ENCODE measurements at regions of chr13 and their contacts with region 1.

Region 1: GRCh38 chr13:79423801-79424642 is 18.0 kb upstream of the RBM26 start:
- DNase-seq: no peak
- ATAC-seq: peak; percentile 85
- H3K4me3 ChIP-seq: no peak overlapping the region
- H3K27ac ChIP-seq: no peak overlapping the region
- H3K4me1 ChIP-seq: no peaks in the 10 kb centered on the region
- H3K27me3 ChIP-seq: no peaks in the 10 kb centered on the region
- CTCF ChIP-seq: peak; percentile 46 to 71 (median 56); a peak in 5 of 6 replicates
- EP300 ChIP-seq: no peak
- POLR2A ChIP-seq: no peak
- RAD21 ChIP-seq: peak; percentile 90

Region 2: GRCh38 chr13:78393286-78394138 is 1030.5 kb before region 1 on chr13:
- CTCF ChIA-PET with region 1: no interaction called
- POLR2A ChIA-PET with region 1: no interaction called
- RAD21 ChIA-PET with region 1: no interaction called
- SMC1A ChIA-PET with region 1: no interaction called
- in situ Hi-C with region 1: no loop called
- intact Hi-C with region 1: no loop called
- DNase-seq: no peak
- ATAC-seq: no peak
- H3K4me3 ChIP-seq: no peak overlapping the region
- H3K27ac ChIP-seq: no peak overlapping the region
- H3K4me1 ChIP-seq: no peaks in the 10 kb centered on the region; the same call in none of the 2 replicates
- H3K27me3 ChIP-seq: no peaks in the 10 kb centered on the region
- CTCF ChIP-seq: no peak
- EP300 ChIP-seq: no peak
- POLR2A ChIP-seq: no peak
- RAD21 ChIP-seq: no peak

Region 3: GRCh38 chr13:79398915-79399314 is 25.1 kb before region 1 on chr13:
- CTCF ChIA-PET with region 1: interaction called, 14 read pairs
- POLR2A ChIA-PET with region 1: no interaction called
- RAD21 ChIA-PET with region 1: interaction called, 11 read pairs
- SMC1A ChIA-PET with region 1: interaction called, 7 read pairs
- in situ Hi-C with region 1: no loop called
- intact Hi-C with region 1: no loop called
- DNase-seq: no peak
- ATAC-seq: no peak
- H3K4me3 ChIP-seq: no peak overlapping the region
- H3K27ac ChIP-seq: no peak overlapping the region
- H3K4me1 ChIP-seq: peaks cover 7% of the 10 kb centered on the region
- H3K27me3 ChIP-seq: no peaks in the 10 kb centered on the region
- CTCF ChIP-seq: no peak
- EP300 ChIP-seq: no peak
- POLR2A ChIP-seq: no peak
- RAD21 ChIP-seq: no peak

Region 4: DNA sequence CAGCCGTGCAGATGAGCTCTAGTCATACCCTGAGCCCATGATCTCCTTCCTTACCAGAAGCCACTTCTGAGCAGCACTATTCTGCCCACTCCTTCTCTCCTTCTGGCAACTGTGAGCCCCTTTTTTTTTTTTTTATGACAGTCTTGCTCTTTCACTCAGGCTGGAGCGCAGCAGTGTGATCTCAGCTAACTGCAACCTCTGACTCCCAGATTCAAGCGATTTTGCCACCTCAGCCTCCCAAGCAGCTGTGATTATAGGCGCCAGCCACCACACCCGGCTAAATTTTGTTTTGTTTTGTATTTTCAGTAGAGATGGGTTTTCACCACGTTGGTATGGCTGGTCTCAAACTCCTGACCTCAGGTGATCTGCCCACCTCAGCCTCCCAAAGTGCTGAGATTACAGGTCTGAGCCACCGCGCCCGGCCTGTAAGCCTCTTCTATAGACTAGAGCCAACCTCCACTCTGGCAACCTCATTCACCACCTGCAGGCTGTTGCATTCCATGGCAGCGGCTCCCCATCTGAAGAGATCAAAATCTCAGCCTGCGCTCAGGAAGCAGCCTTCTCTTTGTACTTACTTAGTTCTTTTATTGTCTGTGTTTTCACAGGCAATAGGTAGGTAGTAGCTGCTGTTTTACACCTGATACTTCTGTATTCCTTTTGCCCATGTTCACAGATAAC is 22.1 kb after region 1 on chr13:
- CTCF ChIA-PET with region 1: interaction called, 22 read pairs
- POLR2A ChIA-PET with region 1: no interaction called
- RAD21 ChIA-PET with region 1: interaction called, 19 read pairs
- SMC1A ChIA-PET with region 1: interaction called, 14 read pairs
- in situ Hi-C with region 1: no loop called
- intact Hi-C with region 1: no loop called
- DNase-seq: no peak
- ATAC-seq: no peak; the same call in 1 of the 3 replicates
- H3K4me3 ChIP-seq: no peak overlapping the region
- H3K27ac ChIP-seq: no peak overlapping the region
- H3K4me1 ChIP-seq: 0 out of 2 replicates have a peak, but pooled peaks cover 1% of the 10 kb centered on the region
- H3K27me3 ChIP-seq: no peaks in the 10 kb centered on the region
- CTCF ChIP-seq: no peak
- EP300 ChIP-seq: no peak
- POLR2A ChIP-seq: no peak
- RAD21 ChIP-seq: no peak

Region 5: DNA sequence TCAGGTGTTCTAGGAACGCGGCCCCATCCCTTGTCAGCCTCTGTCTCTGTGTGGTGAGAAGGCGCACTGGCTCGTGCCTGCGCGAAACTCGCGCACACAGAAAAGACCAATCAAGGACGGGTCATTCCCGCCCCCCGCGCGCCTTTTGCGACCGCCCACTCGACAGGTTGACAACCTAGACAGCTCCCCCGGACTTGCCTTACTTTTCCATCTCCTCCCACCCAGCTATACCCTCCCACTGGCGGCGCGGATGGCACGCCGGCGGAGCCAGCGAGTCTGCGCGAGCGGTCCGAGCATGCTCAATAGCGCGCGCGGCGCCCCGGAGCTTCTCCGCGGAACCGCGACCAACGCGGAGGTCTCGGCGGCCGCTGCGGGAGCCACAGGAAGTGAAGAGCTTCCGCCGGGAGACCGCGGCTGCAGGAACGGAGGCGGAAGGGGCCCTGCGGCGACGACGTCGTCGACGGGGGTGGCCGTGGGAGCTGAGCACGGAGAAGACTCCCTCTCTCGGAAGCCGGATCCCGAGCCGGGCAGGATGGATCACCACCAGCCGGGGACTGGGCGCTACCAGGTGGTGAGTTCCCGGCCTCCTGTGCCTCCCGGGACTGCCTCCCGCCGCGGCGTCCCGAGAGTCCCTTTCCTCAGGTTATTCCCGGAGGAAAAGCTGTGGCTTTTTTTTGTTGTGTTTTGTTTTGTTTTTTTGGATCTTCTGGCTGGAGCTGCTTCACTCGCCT is 57.1 kb after region 1 on chr13 and contains the start of gene NDFIP2:
- CTCF ChIA-PET with region 1: interaction called, 50 read pairs
- POLR2A ChIA-PET with region 1: interaction called, 3 read pairs
- RAD21 ChIA-PET with region 1: interaction called, 58 read pairs
- SMC1A ChIA-PET with region 1: interaction called, 75 read pairs
- in situ Hi-C with region 1: no loop called
- intact Hi-C with region 1: loop called (anchors 5 kb)
- DNase-seq: peak; percentile 58
- ATAC-seq: peak; percentile 89
- H3K4me3 ChIP-seq: peak within 1 kb of the TSS; percentile 97
- H3K27ac ChIP-seq: no peak within 1 kb of the TSS
- H3K4me1 ChIP-seq: peaks cover 4% of the 10 kb centered on the region; the same call in 1 of the 2 replicates
- H3K27me3 ChIP-seq: no peaks in the 10 kb centered on the region
- CTCF ChIP-seq: no peak
- EP300 ChIP-seq: peak; percentile 20 to 45; a peak in 2 of 4 replicates
- POLR2A ChIP-seq: peak; percentile 82
- RAD21 ChIP-seq: no peak
- polyA plus RNA-seq, gene NDFIP2: 23.0 to 30.7 TPM

Region 6: DNA sequence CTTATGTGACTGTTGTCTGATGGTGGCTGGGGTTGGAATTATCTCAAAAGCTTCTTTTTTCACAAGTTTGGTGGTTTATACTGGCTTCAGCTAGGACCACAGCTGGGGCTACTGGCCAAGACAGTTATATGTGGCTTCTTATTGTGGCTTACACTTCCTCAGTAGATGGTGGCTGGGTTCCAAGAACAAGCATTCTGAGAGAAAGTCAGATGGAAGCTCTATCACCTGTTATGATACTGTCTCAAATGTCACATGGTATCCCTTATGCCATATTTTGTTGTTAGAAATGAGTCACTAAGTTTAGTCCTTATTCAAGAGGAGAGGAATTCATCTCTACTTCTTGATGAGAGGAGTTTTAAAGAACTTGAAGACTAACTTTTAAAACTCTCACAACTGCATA is 98.6 kb after region 1 on chr13:
- CTCF ChIA-PET with region 1: interaction called, 564 read pairs
- POLR2A ChIA-PET with region 1: no interaction called
- RAD21 ChIA-PET with region 1: interaction called, 57 read pairs
- SMC1A ChIA-PET with region 1: interaction called, 45 read pairs
- in situ Hi-C with region 1: no loop called
- intact Hi-C with region 1: no loop called
- DNase-seq: peak; percentile 69
- ATAC-seq: peak; percentile 91
- H3K4me3 ChIP-seq: no peak overlapping the region
- H3K27ac ChIP-seq: no peak overlapping the region
- H3K4me1 ChIP-seq: peaks cover 6% of the 10 kb centered on the region
- H3K27me3 ChIP-seq: no peaks in the 10 kb centered on the region
- CTCF ChIP-seq: no peak
- EP300 ChIP-seq: peak in 1 of 2 experiments; percentile 57; a peak in 1 of 4 replicates
- POLR2A ChIP-seq: no peak
- RAD21 ChIP-seq: no peak

Region 7: DNA sequence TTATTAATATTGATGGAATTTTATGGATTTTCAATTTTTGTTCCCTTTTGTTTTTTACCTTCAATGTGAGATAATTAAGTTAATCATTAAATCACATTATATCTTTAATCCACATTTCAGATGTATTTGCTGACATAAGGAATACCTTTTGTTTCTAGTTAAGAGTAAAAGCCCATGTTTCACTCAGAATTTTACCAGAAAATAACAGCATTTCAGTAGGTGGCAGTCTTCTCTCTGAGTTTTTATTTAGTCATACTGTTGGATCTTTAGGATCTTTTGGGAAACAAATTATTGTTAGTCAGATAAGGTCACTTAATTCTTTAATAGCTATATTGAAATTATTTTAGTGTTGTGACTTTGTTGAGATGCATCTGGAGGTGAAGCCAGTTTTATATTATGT is 124.9 kb after region 1 on chr13:
- CTCF ChIA-PET with region 1: interaction called, 223 read pairs
- POLR2A ChIA-PET with region 1: interaction called, 3 read pairs
- RAD21 ChIA-PET with region 1: interaction called, 183 read pairs
- SMC1A ChIA-PET with region 1: interaction called, 169 read pairs
- in situ Hi-C with region 1: no loop called
- intact Hi-C with region 1: no loop called
- DNase-seq: no peak
- ATAC-seq: no peak
- H3K4me3 ChIP-seq: no peak overlapping the region
- H3K27ac ChIP-seq: no peak overlapping the region
- H3K4me1 ChIP-seq: no peaks in the 10 kb centered on the region
- H3K27me3 ChIP-seq: no peaks in the 10 kb centered on the region
- CTCF ChIP-seq: no peak; a peak in 1 of 6 replicates
- EP300 ChIP-seq: no peak
- POLR2A ChIP-seq: no peak
- RAD21 ChIP-seq: no peak

Region 8: GRCh38 chr13:80214521-80214991 is 790.5 kb after region 1 on chr13:
- CTCF ChIA-PET with region 1: no interaction called
- POLR2A ChIA-PET with region 1: no interaction called
- RAD21 ChIA-PET with region 1: no interaction called
- SMC1A ChIA-PET with region 1: no interaction called
- in situ Hi-C with region 1: no loop called
- intact Hi-C with region 1: no loop called
- DNase-seq: no peak
- ATAC-seq: peak; percentile 54
- H3K4me3 ChIP-seq: no peak overlapping the region
- H3K27ac ChIP-seq: no peak overlapping the region
- H3K4me1 ChIP-seq: no peaks in the 10 kb centered on the region
- H3K27me3 ChIP-seq: no peaks in the 10 kb centered on the region
- CTCF ChIP-seq: no peak
- EP300 ChIP-seq: no peak
- POLR2A ChIP-seq: no peak
- RAD21 ChIP-seq: no peak

Measured in GM12878 (cell line).